Ovary (tissue), 10 donors: ENCODE measurements at regions of chr11 and their contacts with region 1.

Region 1: DNA sequence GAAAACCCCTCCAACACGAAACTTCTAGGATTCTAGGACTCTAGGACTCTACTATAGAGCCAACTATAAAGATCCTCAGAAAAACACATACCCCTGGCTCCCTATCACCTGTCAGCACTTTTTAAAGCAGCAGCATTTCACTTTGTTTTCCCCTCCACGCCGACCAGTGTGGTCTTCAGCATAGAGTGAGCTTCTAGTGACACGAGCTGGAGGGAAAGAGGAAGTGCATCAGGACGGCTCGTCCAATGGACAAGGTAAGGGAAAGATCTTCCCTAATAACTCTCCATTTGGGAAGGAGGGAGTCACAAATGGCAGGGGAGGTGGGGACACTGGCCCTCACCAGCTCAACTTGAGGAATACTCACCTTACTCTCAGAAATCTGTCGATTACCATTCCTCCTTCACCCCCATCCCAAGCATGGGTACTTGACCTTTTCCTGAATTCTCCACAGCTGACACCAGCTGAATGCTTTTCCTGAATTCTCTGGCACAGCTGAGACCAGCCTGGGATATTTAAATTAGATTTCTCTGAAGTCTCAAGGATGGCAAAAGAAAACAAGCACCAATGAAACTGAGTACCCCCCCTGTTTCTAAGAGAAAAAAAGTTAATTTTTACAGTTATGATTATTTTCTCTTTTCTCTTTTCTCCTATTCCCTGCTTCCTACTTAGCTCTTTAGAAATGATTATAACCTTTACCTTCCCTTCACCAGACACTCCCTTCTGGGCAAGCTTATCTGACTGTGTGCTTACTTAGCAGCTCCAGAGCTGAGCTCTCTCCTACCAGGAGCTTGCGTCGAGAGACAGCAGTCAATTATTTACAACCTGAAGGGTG is 33.3 kb upstream of the NNMT start:
- DNase-seq: peak in 1 of 5 donors; percentile 52
- H3K4me3 ChIP-seq: no peak overlapping the region
- H3K27ac ChIP-seq: no peak overlapping the region
- H3K4me1 ChIP-seq: peaks cover 5% of the 10 kb centered on the region
- H3K27me3 ChIP-seq: peaks cover 3% of the 10 kb centered on the region
- CTCF ChIP-seq: peak; percentile 17 to 67 (median 35)
- EP300 ChIP-seq: no peak
- POLR2A ChIP-seq: no peak

Region 2: GRCh38 chr11:113896156-113896879 is 366.6 kb before region 1 on chr11:
- intact Hi-C with region 1: loop called in 3 of 4 experiments (anchors 2 to 10 kb)
- DNase-seq: peak in 4 of 5 donors; percentile 41 to 51 (median 48)
- H3K4me3 ChIP-seq: no peak overlapping the region
- H3K27ac ChIP-seq: no peak overlapping the region
- H3K4me1 ChIP-seq: peaks cover 1% of the 10 kb centered on the region
- H3K27me3 ChIP-seq: no peaks in the 10 kb centered on the region
- CTCF ChIP-seq: peak; percentile 48 to 69 (median 66)
- EP300 ChIP-seq: no peak
- POLR2A ChIP-seq: no peak

Region 3: GRCh38 chr11:113994077-113994954 is 268.6 kb before region 1 on chr11:
- intact Hi-C with region 1: loop called (anchors 5 kb)
- DNase-seq: peak in 2 of 5 donors; percentile 24 to 39
- H3K4me3 ChIP-seq: no peak overlapping the region
- H3K27ac ChIP-seq: no peak overlapping the region
- H3K4me1 ChIP-seq: no peaks in the 10 kb centered on the region
- H3K27me3 ChIP-seq: no peaks in the 10 kb centered on the region
- CTCF ChIP-seq: peak; percentile 33 to 54 (median 33)
- EP300 ChIP-seq: no peak
- POLR2A ChIP-seq: no peak

Region 4: GRCh38 chr11:114036156-114036811 is 226.6 kb before region 1 on chr11:
- intact Hi-C with region 1: loop called (anchors 2 to 5 kb)
- DNase-seq: peak; percentile 80 to 90 (median 84)
- H3K4me3 ChIP-seq: peak overlapping the region; percentile 40
- H3K27ac ChIP-seq: peak overlapping the region; percentile 54 to 71
- H3K4me1 ChIP-seq: peaks cover 1% of the 10 kb centered on the region
- H3K27me3 ChIP-seq: no peaks in the 10 kb centered on the region
- CTCF ChIP-seq: peak; percentile 75 to 88 (median 85)
- EP300 ChIP-seq: no peak
- POLR2A ChIP-seq: no peak